CD4-positive, alpha-beta T cell (primary cell): ENCODE measurements at regions of chr17 and their contacts with region 1.

Region 1: GRCh38 chr17:2672026-2672425 is 39.5 kb downstream of the CLUH start:
- DNase-seq: no peak
- ATAC-seq: no peak
- H3K4me3 ChIP-seq: no peak overlapping the region
- H3K4me3 Mint-ChIP-seq: no peak overlapping the region
- H3K27ac ChIP-seq: no peak overlapping the region
- H3K27ac Mint-ChIP-seq: no peak overlapping the region
- H3K4me1 ChIP-seq: no peaks in the 10 kb centered on the region
- H3K4me1 Mint-ChIP-seq: peaks cover 10% of the 10 kb centered on the region
- H3K27me3 ChIP-seq: no peaks in the 10 kb centered on the region
- H3K27me3 Mint-ChIP-seq: no peaks in the 10 kb centered on the region
- CTCF ChIP-seq: no peak

Region 2: GRCh38 chr17:2484876-2485275 is 187.2 kb before region 1 on chr17:
- CTCF ChIA-PET with region 1: no interaction called
- POLR2A ChIA-PET with region 1: no interaction called
- intact Hi-C with region 1: loop called in 1 of 2 experiments (anchors 10 kb)
- DNase-seq: no peak
- ATAC-seq: no peak
- H3K4me3 ChIP-seq: no peak overlapping the region
- H3K4me3 Mint-ChIP-seq: no peak overlapping the region
- H3K27ac ChIP-seq: no peak overlapping the region
- H3K27ac Mint-ChIP-seq: no peak overlapping the region
- H3K4me1 ChIP-seq: peaks cover 19% of the 10 kb centered on the region
- H3K4me1 Mint-ChIP-seq: peaks cover 69% of the 10 kb centered on the region
- H3K27me3 ChIP-seq: no peaks in the 10 kb centered on the region
- H3K27me3 Mint-ChIP-seq: no peaks in the 10 kb centered on the region
- CTCF ChIP-seq: no peak

Region 3: GRCh38 chr17:2636201-2636910 is 35.7 kb before region 1 on chr17:
- CTCF ChIA-PET with region 1: no interaction called
- POLR2A ChIA-PET with region 1: no interaction called
- intact Hi-C with region 1: no loop called
- DNase-seq: no peak
- ATAC-seq: no peak
- H3K4me3 ChIP-seq: no peak overlapping the region
- H3K4me3 Mint-ChIP-seq: no peak overlapping the region
- H3K27ac ChIP-seq: no peak overlapping the region
- H3K27ac Mint-ChIP-seq: peak overlapping the region; percentile 61
- H3K4me1 ChIP-seq: peaks cover 15% of the 10 kb centered on the region
- H3K4me1 Mint-ChIP-seq: peaks cover 53% of the 10 kb centered on the region
- H3K27me3 ChIP-seq: no peaks in the 10 kb centered on the region
- H3K27me3 Mint-ChIP-seq: no peaks in the 10 kb centered on the region
- CTCF ChIP-seq: no peak

Region 4: GRCh38 chr17:3913531-3914311 is 1241.7 kb after region 1 on chr17:
- CTCF ChIA-PET with region 1: no interaction called
- POLR2A ChIA-PET with region 1: no interaction called
- intact Hi-C with region 1: no loop called
- DNase-seq: peak; percentile 68 to 89 (median 76)
- ATAC-seq: peak; percentile 61
- H3K4me3 ChIP-seq: no peak overlapping the region
- H3K4me3 Mint-ChIP-seq: no peak overlapping the region
- H3K27ac ChIP-seq: no peak overlapping the region
- H3K27ac Mint-ChIP-seq: peak overlapping the region; percentile 78
- H3K4me1 ChIP-seq: peaks cover 55% of the 10 kb centered on the region
- H3K4me1 Mint-ChIP-seq: peaks cover 50% of the 10 kb centered on the region
- H3K27me3 ChIP-seq: no peaks in the 10 kb centered on the region
- H3K27me3 Mint-ChIP-seq: no peaks in the 10 kb centered on the region
- CTCF ChIP-seq: peak; percentile 98